ENCODE measurements at regions of chr22 and their contacts with region 1.

Region 1: GRCh38 chr22:19432133-19432851 is at the start of gene MRPL40:
- DNase-seq: peak; percentile 100
- ATAC-seq: peak; percentile 92
- H3K4me3 ChIP-seq: peak within 1 kb of the TSS; percentile 68
- H3K27ac ChIP-seq: peak within 1 kb of the TSS; percentile 87
- H3K4me1 ChIP-seq: peaks cover 17 to 39% of the 10 kb centered on the region in 2 experiments
- H3K27me3 ChIP-seq: no peaks in the 10 kb centered on the region
- CTCF ChIP-seq: peak in 2 of 3 experiments; percentile 16 to 23; a peak in 1 of 6 replicates
- EP300 ChIP-seq: peak; percentile 90
- POLR2A ChIP-seq: no peak
- RAD21 ChIP-seq: peak; percentile 31 to 59; a peak in 3 of 4 replicates
- polyA plus RNA-seq, gene MRPL40: 601 to 652 TPM

Region 2: GRCh38 chr22:19122143-19122751 is 310.0 kb before region 1 on chr22 and contains the start of gene DGCR2:
- CTCF ChIA-PET with region 1: no interaction called
- POLR2A ChIA-PET with region 1: no interaction called
- in situ Hi-C with region 1: no loop called
- intact Hi-C with region 1: loop called (anchors 5 kb)
- DNase-seq: peak; percentile 100
- ATAC-seq: peak; percentile 96
- H3K4me3 ChIP-seq: peak within 1 kb of the TSS; percentile 77
- H3K27ac ChIP-seq: peak within 1 kb of the TSS; percentile 77
- H3K4me1 ChIP-seq: peaks cover 30 to 52% of the 10 kb centered on the region in 2 experiments
- H3K27me3 ChIP-seq: peaks cover 18 to 26% of the 10 kb centered on the region in 2 experiments; a peak in 4 of 5 replicates
- CTCF ChIP-seq: no peak; a peak in 1 of 6 replicates
- EP300 ChIP-seq: 0 out of 2 replicates have a peak, but pooled peaks have one; percentile 3
- POLR2A ChIP-seq: peak; percentile 98
- RAD21 ChIP-seq: no peak
- polyA plus RNA-seq, gene DGCR2: 0.69 to 0.70 TPM

Region 3: GRCh38 chr22:19307872-19308271 is 124.4 kb before region 1 on chr22:
- CTCF ChIA-PET with region 1: no interaction called
- POLR2A ChIA-PET with region 1: no interaction called
- in situ Hi-C with region 1: no loop called
- intact Hi-C with region 1: loop called (anchors 5 kb)
- DNase-seq: no peak
- ATAC-seq: no peak
- H3K4me3 ChIP-seq: no peak overlapping the region
- H3K27ac ChIP-seq: no peak overlapping the region
- H3K4me1 ChIP-seq: no peaks in the 10 kb centered on the region
- H3K27me3 ChIP-seq: peaks cover 12 to 13% of the 10 kb centered on the region in 2 experiments; a peak in 4 of 5 replicates
- CTCF ChIP-seq: no peak
- EP300 ChIP-seq: no peak
- POLR2A ChIP-seq: no peak
- RAD21 ChIP-seq: no peak

Region 4: GRCh38 chr22:19407649-19408606 is 24.4 kb before region 1 on chr22:
- CTCF ChIA-PET with region 1: no interaction called
- POLR2A ChIA-PET with region 1: interaction called, 212 read pairs
- in situ Hi-C with region 1: no loop called
- intact Hi-C with region 1: no loop called
- DNase-seq: peak; percentile 90 to 96 (median 94)
- ATAC-seq: peak; percentile 76
- H3K4me3 ChIP-seq: no peak overlapping the region
- H3K27ac ChIP-seq: no peak overlapping the region; the same call in 2 of the 3 replicates
- H3K4me1 ChIP-seq: peaks cover 18 to 24% of the 10 kb centered on the region in 2 experiments; a peak in 4 of 5 replicates
- H3K27me3 ChIP-seq: no peaks in the 10 kb centered on the region
- CTCF ChIP-seq: peak in 1 of 3 experiments; percentile 3; a peak in 1 of 6 replicates
- EP300 ChIP-seq: peak; percentile 91
- POLR2A ChIP-seq: peak; percentile 51; the same call in 1 of the 2 replicates
- RAD21 ChIP-seq: no peak; a peak in 1 of 4 replicates

Region 5: DNA sequence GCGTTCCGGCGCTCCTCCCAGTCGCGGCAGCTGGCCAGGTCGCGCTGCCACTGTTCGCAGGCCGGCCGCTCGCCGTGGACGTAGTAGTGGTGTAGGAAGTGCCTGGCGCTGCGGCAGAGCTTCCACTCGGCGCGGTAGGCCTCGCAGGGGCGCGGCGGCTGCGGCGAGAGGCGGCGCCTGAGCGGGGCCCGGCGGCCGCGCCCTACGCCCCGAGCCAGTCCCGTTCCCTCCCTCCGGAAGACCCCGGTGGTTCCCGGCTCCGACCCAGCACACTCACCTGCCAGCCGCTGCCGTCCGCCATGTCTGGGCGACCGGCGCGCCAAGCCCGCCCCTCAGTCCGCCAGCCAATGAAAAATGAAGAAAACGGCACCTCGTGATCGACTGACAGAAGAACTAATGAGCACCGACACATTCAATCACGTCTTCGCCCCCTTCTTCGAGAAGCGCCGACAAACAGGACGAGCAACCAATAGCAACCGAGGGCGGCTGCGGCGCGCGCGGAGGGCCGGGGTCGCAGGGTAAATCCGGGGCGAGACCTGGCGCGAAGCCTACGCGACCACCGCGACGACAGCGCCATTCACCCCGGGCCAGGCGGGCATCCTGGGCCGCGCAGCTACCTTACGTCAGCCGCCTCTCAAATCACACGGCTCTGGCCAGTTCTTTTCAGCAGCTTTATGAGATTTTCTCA is 15.2 kb after region 1 on chr22 and contains the start of gene C22orf39:
- CTCF ChIA-PET with region 1: no interaction called
- POLR2A ChIA-PET with region 1: interaction called, 284 read pairs
- in situ Hi-C with region 1: no loop called
- intact Hi-C with region 1: loop called (anchors 2 kb)
- DNase-seq: peak; percentile 99 to 100 (median 100)
- ATAC-seq: peak; percentile 95
- H3K4me3 ChIP-seq: peak within 1 kb of the TSS; percentile 73
- H3K27ac ChIP-seq: peak within 1 kb of the TSS; percentile 86
- H3K4me1 ChIP-seq: peaks cover 27 to 38% of the 10 kb centered on the region in 2 experiments
- H3K27me3 ChIP-seq: no peaks in the 10 kb centered on the region
- CTCF ChIP-seq: 0 out of 6 replicates have a peak, but pooled peaks of 1 of the 3 experiments have one; percentile 4
- EP300 ChIP-seq: 0 out of 2 replicates have a peak, but pooled peaks have one; percentile 14
- POLR2A ChIP-seq: peak; percentile 97
- RAD21 ChIP-seq: peak; percentile 31 to 47
- polyA plus RNA-seq, gene C22orf39: 20.4 to 25.9 TPM

Region 6: GRCh38 chr22:19463496-19464469 is 31.5 kb after region 1 on chr22:
- CTCF ChIA-PET with region 1: no interaction called
- POLR2A ChIA-PET with region 1: interaction called, 11 read pairs
- in situ Hi-C with region 1: no loop called
- intact Hi-C with region 1: no loop called
- DNase-seq: peak in 1 of 4 experiments; percentile 50
- ATAC-seq: peak; percentile 21
- H3K4me3 ChIP-seq: no peak overlapping the region
- H3K27ac ChIP-seq: no peak overlapping the region
- H3K4me1 ChIP-seq: no peaks in the 10 kb centered on the region
- H3K27me3 ChIP-seq: no peaks in the 10 kb centered on the region
- CTCF ChIP-seq: no peak
- EP300 ChIP-seq: no peak
- POLR2A ChIP-seq: no peak; the same call in 1 of the 2 replicates
- RAD21 ChIP-seq: 0 out of 4 replicates have a peak, but pooled peaks of 1 of the 2 experiments have one; percentile 13